ENCODE measurements at regions of chr4 and their contacts with region 1.

Region 1: DNA sequence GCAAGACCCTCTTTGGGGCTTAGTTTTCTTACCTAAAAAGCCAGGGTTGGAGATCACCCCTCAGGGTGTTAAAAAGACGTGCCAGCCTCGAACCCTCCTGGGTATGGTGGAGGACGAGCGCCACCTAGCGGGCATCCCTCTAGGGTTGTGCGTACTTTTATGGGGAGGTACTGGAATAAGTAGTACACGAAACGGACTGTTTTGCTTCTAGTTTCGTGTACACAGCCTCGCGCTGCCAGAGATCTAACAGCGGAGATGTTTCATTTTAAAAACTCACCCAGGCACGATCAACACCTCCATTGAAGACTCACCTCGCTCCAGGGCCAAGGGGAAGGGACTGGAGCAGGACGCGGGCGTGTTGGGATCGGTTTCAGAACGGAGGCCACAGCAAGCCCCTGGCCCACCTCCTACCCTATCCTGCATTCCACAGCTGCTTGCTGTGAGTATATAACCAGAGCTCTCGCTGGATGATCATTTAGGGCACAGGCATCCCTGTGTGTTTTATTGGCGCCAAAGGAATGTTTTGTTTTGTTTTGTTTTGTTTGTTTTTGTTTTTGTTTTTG is 4.8 kb upstream of the NKX3-2 start:
- DNase-seq: peak; percentile 65
- H3K4me3 ChIP-seq: no peak overlapping the region
- H3K27ac ChIP-seq: no peak overlapping the region
- H3K4me1 ChIP-seq: no peaks in the 10 kb centered on the region
- H3K27me3 ChIP-seq: peaks cover 12% of the 10 kb centered on the region
- CTCF ChIP-seq: peak; percentile 65 to 92 (median 78)
- POLR2A ChIP-seq: no peak

Region 2: GRCh38 chr4:12729384-12729783 is 819.7 kb before region 1 on chr4:
- intact Hi-C with region 1: loop called (anchors 5 kb)
- DNase-seq: no peak
- H3K4me3 ChIP-seq: no peak overlapping the region
- H3K27ac ChIP-seq: no peak overlapping the region
- H3K4me1 ChIP-seq: no peaks in the 10 kb centered on the region
- H3K27me3 ChIP-seq: no peaks in the 10 kb centered on the region
- CTCF ChIP-seq: peak in 2 of 4 experiments; percentile 12 to 44
- POLR2A ChIP-seq: no peak

Region 3: DNA sequence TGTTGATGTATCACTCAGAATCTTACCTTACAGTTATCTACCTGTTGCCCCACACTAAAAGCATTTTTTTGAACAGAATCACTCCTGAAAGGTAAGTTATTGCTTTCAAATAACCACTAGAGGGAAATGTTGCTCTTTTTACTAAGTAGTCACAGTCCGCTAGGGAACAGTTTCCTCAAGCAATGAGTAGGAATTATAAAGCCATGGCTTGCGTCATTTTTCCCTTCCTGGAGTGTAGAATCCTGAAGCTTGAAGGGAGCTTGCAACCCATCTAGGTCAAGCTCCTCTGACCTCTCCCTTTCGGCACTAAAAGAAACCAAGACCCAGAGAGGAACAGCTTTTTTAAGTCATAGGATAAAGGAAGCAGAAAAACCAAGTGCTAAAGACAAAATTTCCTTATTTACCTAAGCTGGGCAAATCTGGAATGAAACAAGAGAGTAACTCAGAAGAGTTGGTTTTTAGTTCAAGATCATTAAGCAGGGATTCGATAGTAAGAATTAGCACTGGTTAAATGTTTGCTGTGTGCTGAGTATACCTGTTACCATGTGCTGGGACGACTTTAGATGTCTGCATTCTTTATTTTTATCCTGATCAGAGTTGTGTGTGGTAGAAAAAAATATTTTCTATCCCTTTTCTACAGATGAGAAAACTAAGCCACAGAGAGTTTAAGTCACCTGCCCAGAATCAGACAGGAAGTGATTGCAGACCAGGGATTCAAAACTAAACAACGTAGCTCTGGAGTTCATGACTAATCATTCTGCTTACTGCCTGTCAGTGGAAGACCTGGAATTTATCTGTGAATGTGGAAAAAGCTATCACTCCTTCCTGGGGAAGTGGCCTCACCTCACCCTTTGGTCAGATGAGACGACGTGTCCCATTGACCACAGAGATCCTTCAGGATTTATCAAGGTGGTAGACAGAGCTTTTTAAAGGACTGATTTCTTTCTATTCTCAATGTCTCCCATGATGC is 696.4 kb before region 1 on chr4:
- intact Hi-C with region 1: loop called (anchors 5 kb)
- DNase-seq: peak; percentile 10
- H3K4me3 ChIP-seq: no peak overlapping the region
- H3K27ac ChIP-seq: no peak overlapping the region
- H3K4me1 ChIP-seq: no peaks in the 10 kb centered on the region
- H3K27me3 ChIP-seq: no peaks in the 10 kb centered on the region
- CTCF ChIP-seq: peak in 3 of 4 experiments; percentile 67 to 72 (median 70)
- POLR2A ChIP-seq: no peak

Region 4: DNA sequence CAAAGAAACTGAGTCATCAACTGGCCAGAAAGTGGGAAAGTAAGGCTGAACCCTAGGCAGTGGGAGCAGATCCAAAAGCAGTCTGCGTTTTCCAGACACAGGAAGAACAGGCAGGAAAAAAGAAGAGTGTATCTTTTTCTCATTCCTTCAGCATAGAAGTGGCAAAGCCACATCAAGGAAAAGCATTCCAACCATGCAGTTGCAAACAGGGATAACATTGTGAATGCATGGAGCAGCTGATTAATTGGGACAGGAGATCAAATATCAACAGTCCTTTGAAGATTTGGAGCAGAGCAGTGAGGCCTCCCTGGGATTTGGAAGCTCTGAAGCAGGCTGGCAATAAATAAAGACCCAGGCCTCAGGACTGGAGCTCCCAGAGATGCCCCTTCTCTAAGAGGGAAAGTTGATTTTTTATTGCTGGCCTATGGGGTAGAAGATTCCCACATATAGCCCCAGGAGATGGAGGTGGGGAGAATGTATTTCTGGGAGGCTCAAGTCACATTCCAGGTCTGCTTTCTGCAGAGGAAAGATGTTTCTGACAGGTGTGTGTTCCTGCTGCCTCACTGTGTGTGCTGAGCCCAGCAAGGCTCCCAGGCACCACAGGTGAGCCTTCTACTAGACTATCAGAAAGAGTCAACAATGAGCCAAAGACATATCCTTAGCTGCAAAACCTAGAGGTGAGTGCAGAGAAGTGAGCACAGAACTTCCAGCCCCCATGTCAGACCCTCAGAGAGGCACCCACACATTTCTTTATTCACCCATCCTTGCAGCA is 287.4 kb before region 1 on chr4:
- intact Hi-C with region 1: no loop called
- DNase-seq: no peak
- H3K4me3 ChIP-seq: no peak overlapping the region
- H3K27ac ChIP-seq: no peak overlapping the region
- H3K4me1 ChIP-seq: no peaks in the 10 kb centered on the region
- H3K27me3 ChIP-seq: no peaks in the 10 kb centered on the region
- CTCF ChIP-seq: no peak
- POLR2A ChIP-seq: no peak

Region 5: GRCh38 chr4:13461191-13461905 is 87.7 kb before region 1 on chr4:
- intact Hi-C with region 1: no loop called
- DNase-seq: no peak
- H3K4me3 ChIP-seq: no peak overlapping the region
- H3K27ac ChIP-seq: no peak overlapping the region
- H3K4me1 ChIP-seq: no peaks in the 10 kb centered on the region
- H3K27me3 ChIP-seq: no peaks in the 10 kb centered on the region
- CTCF ChIP-seq: no peak
- POLR2A ChIP-seq: no peak